ENCODE measurements at regions of chr4 and their contacts with region 1.

Region 1: GRCh38 chr4:146333187-146333894 is 119.0 kb downstream of the REELD1 start:
- DNase-seq: no peak
- H3K4me3 ChIP-seq: no peak overlapping the region
- H3K27ac ChIP-seq: no peak overlapping the region
- H3K4me1 ChIP-seq: peaks cover 5% of the 10 kb centered on the region
- H3K27me3 ChIP-seq: no peaks in the 10 kb centered on the region
- CTCF ChIP-seq: no peak

Region 2: DNA sequence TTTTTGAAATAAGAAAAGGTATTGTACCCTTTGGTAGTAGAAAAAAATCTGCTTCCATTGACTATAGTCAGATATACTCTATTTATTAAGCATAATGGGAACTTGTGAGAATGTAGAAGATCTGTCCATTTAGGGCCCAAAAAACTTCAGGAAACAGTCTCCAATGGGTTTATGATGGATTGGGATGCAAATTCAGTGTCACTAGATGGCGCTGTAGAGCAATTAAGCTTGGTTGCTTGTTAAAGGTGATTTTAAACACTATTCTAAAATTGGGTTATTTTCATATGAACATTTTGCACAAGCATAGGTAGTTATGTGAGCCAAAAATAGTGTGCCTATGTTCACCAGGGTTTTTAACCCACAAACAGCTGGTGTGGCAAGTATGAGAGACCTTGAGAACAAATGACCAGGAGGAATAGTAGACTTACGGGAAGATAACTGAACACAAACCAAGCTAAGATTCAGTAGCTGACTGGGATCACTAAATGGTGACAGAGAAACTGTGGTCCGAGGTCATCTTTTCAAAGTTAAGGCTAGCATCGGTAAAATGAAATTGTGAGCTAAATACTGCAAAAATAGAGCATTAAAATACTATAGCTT is 238.2 kb before region 1 on chr4:
- intact Hi-C with region 1: loop called (anchors 5 kb)
- DNase-seq: peak; percentile 73
- H3K4me3 ChIP-seq: no peak overlapping the region
- H3K27ac ChIP-seq: no peak overlapping the region
- H3K4me1 ChIP-seq: no peaks in the 10 kb centered on the region
- H3K27me3 ChIP-seq: no peaks in the 10 kb centered on the region
- CTCF ChIP-seq: peak; percentile 46

Measured in colonic mucosa (tissue), 4 donors.